ENCODE measurements at regions of chr10 and their contacts with region 1.

Region 1: DNA sequence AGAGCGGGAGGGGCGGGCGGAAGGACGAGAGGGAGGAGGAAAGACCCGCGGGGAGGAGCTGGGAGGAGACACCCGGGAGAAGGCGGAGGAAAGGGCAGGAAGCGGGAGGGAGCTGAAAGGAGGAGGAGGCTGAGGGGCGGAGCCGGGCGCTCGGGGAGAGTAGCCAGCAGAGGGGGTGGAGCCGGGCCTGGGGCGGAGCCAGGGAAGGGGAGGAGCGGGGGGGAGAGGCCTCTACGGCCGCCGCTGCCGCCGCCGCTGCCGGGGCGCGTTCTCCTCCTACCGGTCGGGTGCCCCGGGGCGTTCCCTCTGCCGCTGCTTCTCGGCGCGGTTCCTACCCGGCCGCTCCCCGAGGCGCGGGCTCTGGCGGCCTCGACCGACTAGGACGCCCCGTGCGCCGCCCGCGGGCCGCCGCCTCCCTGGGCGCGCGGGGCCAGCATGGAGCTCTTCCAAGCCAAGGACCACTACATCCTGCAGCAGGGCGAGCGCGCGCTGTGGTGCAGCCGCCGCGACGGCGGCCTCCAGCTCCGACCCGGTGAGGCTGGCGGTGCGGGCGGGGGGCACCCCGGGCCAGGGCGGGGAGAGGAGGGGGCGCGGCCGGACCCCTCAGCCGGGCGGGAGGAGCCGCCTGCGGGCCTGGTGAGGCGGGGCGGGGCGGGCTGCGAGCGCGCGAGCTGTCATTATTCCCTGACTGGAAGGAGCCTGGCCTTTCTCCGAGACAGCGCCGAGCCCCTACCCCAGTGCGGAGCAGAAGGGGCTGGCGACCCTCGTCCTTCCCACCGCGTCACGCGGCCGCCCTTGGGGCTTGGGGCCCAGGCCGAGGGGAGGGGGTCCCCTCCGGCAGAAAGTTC is at the start of gene INPP5F:
- DNase-seq: peak; percentile 99
- ATAC-seq: peak; percentile 99
- total RNA-seq, gene INPP5F: 4.5 TPM

Region 2: GRCh38 chr10:119650692-119651513 is 75.1 kb before region 1 on chr10 and contains the start of gene BAG3:
- intact Hi-C with region 1: loop called (anchors 2 kb)
- DNase-seq: peak; percentile 97
- ATAC-seq: peak; percentile 92
- total RNA-seq, gene BAG3: 153 TPM

Region 3: DNA sequence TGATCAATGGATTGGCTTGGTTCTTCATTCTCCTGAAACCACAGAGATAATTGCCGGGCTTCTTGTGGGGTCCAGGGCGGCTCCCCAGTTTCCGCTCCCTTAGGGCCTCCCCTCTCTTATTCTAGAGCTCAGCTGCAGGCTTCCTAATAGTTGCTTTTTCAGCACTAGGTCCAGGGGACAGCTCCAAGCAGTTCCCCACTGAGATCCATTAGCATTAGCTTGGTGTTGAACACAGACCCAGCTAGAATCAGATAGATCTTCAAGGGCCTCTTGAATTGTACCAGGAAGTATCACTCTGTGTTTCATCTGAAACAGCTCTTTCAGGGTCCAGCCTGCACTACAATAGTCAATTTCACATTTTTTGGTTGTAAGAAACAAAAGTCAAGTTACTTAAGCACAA is 405.1 kb after region 1 on chr10:
- intact Hi-C with region 1: no loop called
- DNase-seq: no peak
- ATAC-seq: no peak

Measured in Right ventricle myocardium superior (tissue), 1 donor.